ENCODE measurements at regions of chr14 and their contacts with region 1.

Region 1: GRCh38 chr14:73741386-73741875 is 27.2 kb upstream of the PNMA1 start:
- DNase-seq: peak; percentile 69
- ATAC-seq: peak; percentile 87
- H3K4me3 Mint-ChIP-seq: peak overlapping the region; percentile 41
- H3K27ac Mint-ChIP-seq: peak overlapping the region; percentile 94
- H3K4me1 Mint-ChIP-seq: peaks cover 48% of the 10 kb centered on the region
- H3K27me3 Mint-ChIP-seq: no peaks in the 10 kb centered on the region
- CTCF ChIP-seq: no peak

Region 2: DNA sequence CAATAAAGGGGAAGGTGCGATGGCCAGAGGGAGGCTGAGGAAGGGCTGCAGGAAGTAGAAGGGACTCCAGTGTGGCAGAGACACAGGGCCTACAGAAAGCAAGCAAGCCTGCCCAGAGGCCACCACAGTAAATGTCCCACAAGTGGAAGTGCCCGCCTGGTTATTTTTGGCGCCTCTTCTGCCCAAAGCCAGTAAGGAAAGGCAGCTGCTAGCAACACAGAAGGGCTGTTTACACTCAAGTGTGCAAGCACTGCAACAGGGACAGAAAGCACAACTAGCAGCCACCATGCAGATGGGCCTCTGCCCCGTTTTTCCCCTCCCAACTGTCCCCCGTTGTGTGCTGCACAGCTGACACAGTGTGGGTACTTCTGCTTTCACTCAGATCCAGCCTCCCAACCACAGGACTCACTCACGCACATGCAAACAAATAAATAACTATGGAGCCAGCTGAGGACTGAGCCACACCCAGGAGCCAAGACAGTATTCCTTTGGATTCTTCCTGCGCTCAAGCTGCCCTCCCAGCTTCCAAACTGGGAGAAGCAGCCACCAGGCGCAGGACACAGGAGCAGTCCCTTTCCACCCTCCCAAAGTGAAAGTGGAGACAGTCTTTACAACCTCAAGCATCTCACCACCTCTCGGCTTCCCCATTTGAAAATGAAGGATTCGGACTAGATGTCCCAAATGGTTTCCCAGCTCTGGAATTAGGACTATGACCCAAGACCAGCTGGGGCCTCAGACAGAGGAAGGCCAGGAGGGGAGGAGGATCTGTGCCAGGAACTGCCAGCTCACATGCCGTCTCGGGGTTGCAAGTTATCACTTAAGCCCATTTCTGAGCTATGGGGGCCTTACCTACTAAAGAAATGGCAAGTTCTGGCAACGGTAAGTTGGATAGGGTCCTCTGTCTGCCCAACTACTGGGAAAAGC is 12.8 kb after region 1 on chr14:
- CTCF ChIA-PET with region 1: interaction called, 71 read pairs
- POLR2A ChIA-PET with region 1: interaction called, 9 read pairs
- DNase-seq: no peak
- ATAC-seq: no peak
- H3K4me3 Mint-ChIP-seq: no peak overlapping the region
- H3K27ac Mint-ChIP-seq: peak overlapping the region; percentile 45; the same call in 1 of the 2 replicates
- H3K4me1 Mint-ChIP-seq: peaks cover 72% of the 10 kb centered on the region
- H3K27me3 Mint-ChIP-seq: peaks cover 12% of the 10 kb centered on the region
- CTCF ChIP-seq: no peak

Region 3: GRCh38 chr14:73785873-73786695 is 44.7 kb after region 1 on chr14:
- CTCF ChIA-PET with region 1: interaction called, 12 read pairs
- POLR2A ChIA-PET with region 1: interaction called, 3 read pairs
- DNase-seq: peak; percentile 50
- ATAC-seq: peak; percentile 8
- H3K4me3 Mint-ChIP-seq: peak overlapping the region; percentile 90
- H3K27ac Mint-ChIP-seq: peak overlapping the region; percentile 63
- H3K4me1 Mint-ChIP-seq: peaks cover 43% of the 10 kb centered on the region
- H3K27me3 Mint-ChIP-seq: peaks cover 86% of the 10 kb centered on the region
- CTCF ChIP-seq: no peak